ENCODE measurements at regions of chr15 and their contacts with region 1.

Region 1: DNA sequence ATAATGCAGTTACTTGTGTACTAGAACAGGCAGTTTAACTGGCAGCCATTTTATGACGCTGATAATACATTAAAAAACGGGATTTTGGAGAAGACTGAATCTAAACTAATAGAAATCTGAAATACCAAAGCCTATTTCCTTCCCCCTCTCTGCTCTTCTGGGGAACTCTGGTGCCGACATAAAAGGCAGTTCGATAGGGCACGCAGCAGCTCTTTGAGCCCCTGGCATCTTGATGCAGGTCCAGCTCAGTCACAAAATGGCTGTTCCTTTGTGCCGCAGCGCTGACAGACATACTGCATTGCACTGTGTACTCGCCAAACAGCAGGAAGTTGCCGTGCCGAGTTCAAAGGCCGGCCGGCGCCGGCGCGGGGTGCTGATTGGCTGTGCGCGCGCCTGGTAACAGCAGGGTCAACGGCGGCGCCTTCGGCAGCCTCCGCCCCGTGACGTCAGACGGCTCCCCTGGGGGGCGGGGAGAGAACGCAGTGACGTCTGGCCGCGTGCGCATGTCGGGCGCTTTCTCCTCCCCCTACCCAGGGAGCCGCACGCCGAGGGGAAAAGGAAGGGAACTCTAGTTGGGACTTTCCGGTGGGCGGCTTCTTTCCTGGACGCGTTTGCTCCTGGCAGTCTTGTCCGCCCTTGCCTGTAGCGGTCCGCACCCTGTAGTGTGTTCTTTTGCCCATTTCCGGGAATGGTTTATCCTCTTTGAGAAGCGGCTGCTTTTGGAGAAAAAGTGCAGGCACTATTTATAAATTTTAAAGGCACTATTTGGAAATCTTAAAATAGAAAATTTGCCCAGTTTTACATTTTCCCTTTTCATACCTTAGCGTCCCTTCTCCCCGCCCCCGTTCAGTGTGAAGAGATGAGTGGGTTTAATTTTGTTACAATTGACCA is 4.1 kb downstream of the CHD2 start:
- DNase-seq: peak; percentile 99 to 100
- H3K4me3 ChIP-seq: peak overlapping the region; percentile 50 to 55
- H3K27ac ChIP-seq: peak overlapping the region; percentile 97
- H3K4me1 ChIP-seq: peaks cover 71% of the 10 kb centered on the region
- H3K27me3 ChIP-seq: no peaks in the 10 kb centered on the region
- CTCF ChIP-seq: no peak
- POLR2A ChIP-seq: peak; percentile 51 to 84

Region 2: DNA sequence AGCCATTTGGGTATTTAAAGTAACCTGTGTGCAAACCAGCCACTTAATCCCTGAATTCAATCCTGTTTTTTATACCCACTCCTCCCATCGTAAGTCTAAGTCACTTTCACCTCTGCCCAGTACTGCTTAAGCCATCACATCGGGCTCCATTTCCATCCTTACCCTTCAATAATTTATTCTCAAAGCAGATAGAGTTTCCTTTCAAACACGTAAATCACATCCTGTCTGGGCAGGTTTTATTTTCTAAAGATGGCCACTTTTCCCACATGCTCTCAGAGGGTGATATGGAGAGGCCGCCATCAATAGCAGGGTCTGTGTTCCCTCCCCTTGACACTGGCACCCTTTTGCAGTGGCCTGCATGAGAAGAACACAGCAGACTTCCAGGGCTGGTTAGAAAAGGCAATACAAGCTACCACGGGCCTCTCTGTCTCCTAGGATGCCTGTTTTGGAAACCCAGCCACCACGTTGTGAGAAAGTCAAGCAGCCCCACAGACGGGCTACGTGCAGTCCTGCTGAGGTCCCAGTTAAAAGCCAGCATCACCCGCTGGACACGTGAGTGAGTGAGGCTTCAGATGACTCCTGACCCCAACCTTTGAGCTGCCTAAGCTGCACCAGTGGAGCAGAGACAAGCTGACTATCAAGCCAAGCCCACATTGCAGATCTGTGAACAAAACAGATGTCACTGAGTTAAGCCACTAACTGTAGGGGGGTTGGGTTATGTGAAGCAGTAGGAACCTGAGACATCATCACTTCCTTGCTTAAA is 1292.4 kb before region 1 on chr15:
- intact Hi-C with region 1: no loop called
- DNase-seq: no peak
- H3K4me3 ChIP-seq: no peak overlapping the region
- H3K27ac ChIP-seq: no peak overlapping the region
- H3K4me1 ChIP-seq: no peaks in the 10 kb centered on the region
- H3K27me3 ChIP-seq: no peaks in the 10 kb centered on the region
- CTCF ChIP-seq: no peak
- POLR2A ChIP-seq: no peak

Region 3: DNA sequence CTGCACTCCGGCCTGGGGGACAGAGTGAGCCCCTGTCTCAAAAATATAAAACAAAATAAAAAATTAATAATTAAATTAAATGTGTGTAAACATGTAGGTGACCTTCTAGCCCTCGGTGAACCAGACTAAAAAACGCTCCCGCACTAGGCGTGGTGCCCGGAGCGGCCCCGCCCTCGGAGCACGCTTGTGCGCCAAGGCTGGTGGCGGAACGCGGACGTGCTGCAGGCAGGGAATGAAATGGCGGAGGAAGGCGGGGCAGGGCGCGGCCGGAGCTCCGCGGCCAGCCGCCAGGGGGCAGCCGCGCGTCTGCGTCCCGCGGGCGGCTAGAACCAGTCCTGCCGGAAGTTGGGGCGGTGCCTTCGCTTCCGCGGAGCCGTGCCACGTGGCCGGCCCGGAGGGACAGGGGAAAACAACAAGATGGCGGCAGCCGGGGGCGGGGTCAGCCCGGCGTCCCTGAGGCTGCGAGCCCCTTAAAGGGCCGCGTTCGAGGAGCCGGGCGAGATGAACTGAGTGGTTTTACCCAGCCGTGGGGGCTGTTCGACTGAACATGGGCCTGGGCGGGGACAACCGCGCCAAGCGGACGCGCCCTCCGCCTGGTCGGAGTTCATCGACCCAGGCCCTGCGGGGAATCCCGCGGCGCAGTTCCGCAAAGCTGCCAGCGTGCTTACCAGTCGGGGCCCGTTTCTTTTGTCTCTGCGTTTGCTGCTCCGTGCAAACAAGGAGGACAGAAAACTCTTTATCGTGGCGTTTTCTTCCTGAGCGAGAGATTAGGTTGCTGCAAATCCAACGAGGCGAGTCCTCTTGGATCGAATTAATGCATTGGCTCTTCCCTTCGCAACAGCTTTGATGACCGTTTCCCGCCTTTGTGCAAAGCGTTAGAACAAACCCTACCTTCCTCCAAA is 95.0 kb before region 1 on chr15:
- intact Hi-C with region 1: loop called (anchors 5 kb)
- DNase-seq: peak in 1 of 2 donors; percentile 98
- H3K4me3 ChIP-seq: peak overlapping the region; percentile 62 to 70
- H3K27ac ChIP-seq: peak overlapping the region; percentile 99
- H3K4me1 ChIP-seq: peaks cover 42% of the 10 kb centered on the region
- H3K27me3 ChIP-seq: no peaks in the 10 kb centered on the region
- CTCF ChIP-seq: peak; percentile 78 to 98 (median 97)
- POLR2A ChIP-seq: peak in 1 of 2 donors; percentile 34

Region 4: GRCh38 chr15:92820236-92821021 is 83.8 kb before region 1 on chr15:
- intact Hi-C with region 1: loop called (anchors 5 kb)
- DNase-seq: peak in 1 of 2 donors; percentile 94
- H3K4me3 ChIP-seq: peak overlapping the region; percentile 26 to 35
- H3K27ac ChIP-seq: peak overlapping the region; percentile 75
- H3K4me1 ChIP-seq: peaks cover 33% of the 10 kb centered on the region
- H3K27me3 ChIP-seq: no peaks in the 10 kb centered on the region
- CTCF ChIP-seq: no peak
- POLR2A ChIP-seq: peak in 1 of 2 donors; percentile 53

Region 5: GRCh38 chr15:92979011-92979701 is 75.0 kb after region 1 on chr15:
- intact Hi-C with region 1: no loop called
- DNase-seq: no peak
- H3K4me3 ChIP-seq: no peak overlapping the region
- H3K27ac ChIP-seq: peak overlapping the region; percentile 7
- H3K4me1 ChIP-seq: no peaks in the 10 kb centered on the region
- H3K27me3 ChIP-seq: no peaks in the 10 kb centered on the region
- CTCF ChIP-seq: no peak
- POLR2A ChIP-seq: no peak